MCF 10A (cell line): ENCODE measurements at regions of chr6 and their contacts with region 1.

Region 1: DNA sequence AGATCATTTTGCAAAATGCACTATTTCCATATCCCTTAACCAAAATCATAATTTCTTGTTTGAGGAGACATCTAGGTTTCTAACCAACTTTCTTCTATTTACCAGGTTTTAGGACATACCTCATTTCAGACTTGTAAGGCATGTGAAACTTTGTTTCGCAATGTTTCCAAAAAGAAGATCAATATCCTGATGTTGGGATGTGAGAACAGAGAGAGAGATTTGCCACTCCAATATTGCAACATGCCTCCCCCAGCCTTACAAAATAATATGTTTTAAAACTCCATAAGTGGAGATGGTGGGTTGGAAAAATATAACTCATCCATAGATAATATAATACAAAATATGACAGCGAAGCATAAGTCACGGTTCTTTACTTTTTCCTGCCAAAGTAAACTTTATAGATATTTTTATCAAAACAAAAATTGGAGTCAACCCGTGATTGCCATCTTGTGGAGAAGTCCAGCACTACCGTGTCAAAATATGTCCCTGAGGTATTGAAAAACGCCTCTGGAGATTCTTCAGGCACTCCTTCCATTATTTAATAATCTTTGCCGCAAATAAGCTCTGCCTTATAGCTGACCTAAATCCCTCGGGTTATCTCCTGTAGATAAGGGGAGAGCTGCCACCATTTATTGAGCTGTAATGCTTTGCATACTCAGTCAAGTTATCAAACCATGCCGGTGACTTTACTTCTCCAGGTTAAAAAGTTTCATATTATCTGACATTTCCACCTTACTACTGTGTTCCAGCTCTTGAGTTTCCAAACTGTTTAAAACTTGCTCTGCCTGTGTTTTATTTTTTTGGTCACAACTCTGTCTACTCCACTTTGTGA is 534.2 kb downstream of the HACE1 start:
- DNase-seq: peak; percentile 72
- H3K4me3 Mint-ChIP-seq: peak overlapping the region; percentile 49
- H3K27ac Mint-ChIP-seq: peak overlapping the region; percentile 77
- H3K4me1 Mint-ChIP-seq: peaks cover 33% of the 10 kb centered on the region
- H3K27me3 Mint-ChIP-seq: no peaks in the 10 kb centered on the region
- CTCF ChIP-seq: peak; percentile 53

Region 2: DNA sequence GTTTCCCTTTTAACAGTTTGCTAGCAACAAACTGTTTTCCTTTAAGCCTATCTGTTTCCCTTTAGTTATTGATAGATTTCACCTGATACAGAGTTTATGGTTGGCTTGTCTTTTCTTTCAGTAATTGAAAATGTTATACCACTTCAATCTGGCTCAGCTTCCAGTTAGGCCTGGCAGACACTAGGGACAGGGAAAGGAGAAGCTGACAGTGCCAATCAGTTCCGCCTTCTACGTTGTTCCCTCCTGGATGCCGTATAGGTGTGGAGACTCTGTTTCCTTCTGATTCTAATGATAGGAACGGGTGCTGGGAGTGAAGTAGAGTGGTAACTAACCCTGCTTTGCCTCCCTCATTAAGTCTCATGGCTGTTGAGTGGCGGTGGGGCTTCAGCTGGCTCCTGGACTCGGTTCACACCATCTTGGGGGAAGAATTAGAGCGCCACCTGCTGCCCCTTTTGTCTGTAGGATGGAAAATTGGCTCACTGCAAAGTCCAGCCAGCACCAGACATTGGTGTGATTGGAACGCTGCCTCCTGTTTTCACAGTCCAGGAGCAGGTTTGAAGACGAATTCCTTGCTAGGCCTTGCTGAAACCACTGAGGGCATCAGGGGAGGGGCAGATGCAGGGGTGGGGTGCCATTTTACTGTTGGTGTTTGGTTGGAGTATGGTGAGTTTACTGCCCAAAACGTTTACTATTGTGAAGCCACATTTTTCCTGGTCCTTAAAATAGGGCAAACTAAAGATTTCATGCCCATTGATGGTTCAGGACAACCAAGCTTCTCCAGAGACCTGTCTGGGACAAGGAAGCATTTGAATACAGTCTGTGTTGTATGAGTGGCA is 1202.6 kb before region 1 on chr6:
- CTCF ChIA-PET with region 1: no interaction called
- POLR2A ChIA-PET with region 1: no interaction called
- intact Hi-C with region 1: loop called (anchors 5 kb)
- DNase-seq: peak; percentile 76
- H3K4me3 Mint-ChIP-seq: no peak overlapping the region
- H3K27ac Mint-ChIP-seq: no peak overlapping the region
- H3K4me1 Mint-ChIP-seq: peaks cover 12% of the 10 kb centered on the region
- H3K27me3 Mint-ChIP-seq: no peaks in the 10 kb centered on the region
- CTCF ChIP-seq: peak; percentile 75

Region 3: DNA sequence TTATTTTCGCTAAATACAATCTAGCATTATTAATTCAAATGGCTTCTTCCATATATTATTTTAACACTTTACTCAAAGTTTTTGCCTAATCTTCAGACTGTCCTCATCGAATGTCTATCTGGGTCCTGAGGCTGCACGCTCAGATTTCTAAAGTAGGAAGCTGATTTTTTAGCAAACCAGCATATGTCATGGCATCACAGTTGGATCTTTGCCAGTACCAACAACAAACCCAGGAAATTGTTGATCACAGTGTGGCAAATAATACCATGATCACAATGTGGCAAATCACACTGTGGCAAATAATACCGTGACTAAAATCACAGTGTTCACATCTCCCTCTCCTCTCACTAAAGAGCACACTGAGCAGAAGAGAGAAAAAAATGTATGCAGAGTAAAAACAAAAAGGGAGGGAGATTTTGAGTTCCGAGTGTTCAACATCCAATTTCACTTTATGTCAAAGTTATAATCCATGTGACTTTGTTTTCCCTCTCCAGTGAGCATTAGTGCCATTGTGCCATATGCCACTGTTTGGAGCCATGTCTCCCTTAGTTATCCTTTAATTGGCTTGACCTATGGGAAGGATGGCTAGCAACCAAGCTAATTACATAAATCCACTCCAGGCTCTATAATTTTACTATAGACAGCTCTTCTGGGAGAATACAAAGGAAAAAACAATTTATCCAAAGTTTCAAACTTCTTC is 525.4 kb before region 1 on chr6:
- CTCF ChIA-PET with region 1: interaction called, 8 read pairs
- POLR2A ChIA-PET with region 1: no interaction called
- intact Hi-C with region 1: loop called (anchors 2 kb)
- DNase-seq: no peak
- H3K4me3 Mint-ChIP-seq: no peak overlapping the region
- H3K27ac Mint-ChIP-seq: no peak overlapping the region
- H3K4me1 Mint-ChIP-seq: no peaks in the 10 kb centered on the region
- H3K27me3 Mint-ChIP-seq: peaks cover 52% of the 10 kb centered on the region
- CTCF ChIP-seq: no peak

Region 4: DNA sequence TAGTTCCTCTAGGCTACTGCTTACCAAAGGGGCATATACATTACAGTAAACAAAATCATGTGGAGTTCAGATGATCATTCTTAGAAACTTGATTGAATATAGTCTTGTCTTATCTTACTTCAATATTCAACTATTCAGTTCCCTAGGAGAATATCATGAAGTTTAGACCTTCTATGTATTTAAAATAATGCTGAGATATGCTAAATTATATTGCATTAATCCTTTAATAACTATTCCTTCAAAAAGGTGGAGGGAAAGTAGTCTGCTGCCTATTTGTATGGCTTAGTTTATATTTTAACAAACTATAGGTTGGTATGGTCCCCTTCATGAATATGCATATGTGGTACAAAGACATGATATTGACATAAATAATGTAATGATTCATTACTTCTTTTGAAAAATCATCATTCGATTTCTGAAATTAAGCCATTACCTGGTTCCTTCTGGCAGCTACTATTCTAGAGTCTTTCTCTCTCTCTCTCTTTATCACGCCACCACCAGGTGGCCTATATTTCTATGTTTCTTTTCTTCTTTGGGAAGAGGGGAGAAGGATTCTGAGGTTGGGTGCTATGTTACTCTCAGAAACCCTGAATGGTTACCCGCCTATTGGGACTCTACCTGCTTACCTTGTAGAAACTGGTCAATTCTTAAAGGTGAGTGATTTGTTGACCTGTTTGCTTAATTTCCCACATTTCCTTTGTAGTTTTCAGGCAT is 321.6 kb before region 1 on chr6:
- CTCF ChIA-PET with region 1: interaction called, 5 read pairs
- POLR2A ChIA-PET with region 1: no interaction called
- intact Hi-C with region 1: loop called (anchors 2 kb)
- DNase-seq: peak; percentile 18
- H3K4me3 Mint-ChIP-seq: no peak overlapping the region
- H3K27ac Mint-ChIP-seq: no peak overlapping the region
- H3K4me1 Mint-ChIP-seq: no peaks in the 10 kb centered on the region
- H3K27me3 Mint-ChIP-seq: no peaks in the 10 kb centered on the region
- CTCF ChIP-seq: no peak

Region 5: DNA sequence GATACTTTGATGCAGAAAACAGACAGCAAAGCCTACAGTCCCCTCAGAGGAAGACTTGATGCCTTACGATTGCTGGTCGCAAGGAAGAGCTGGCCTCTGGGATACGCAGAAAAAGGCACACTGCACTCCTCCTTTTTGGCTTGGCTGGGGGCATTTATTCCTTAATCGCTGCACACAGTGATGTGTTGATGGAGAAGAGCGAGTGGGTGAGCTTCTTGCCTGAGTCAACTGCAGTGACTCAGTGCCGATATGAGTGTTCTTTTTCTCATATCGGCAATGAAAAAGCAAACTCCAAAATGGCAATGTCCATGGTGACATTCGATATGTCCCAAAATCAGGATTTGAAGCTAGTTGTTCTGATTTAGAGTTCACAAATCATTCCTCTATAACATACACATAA is 260.7 kb before region 1 on chr6:
- CTCF ChIA-PET with region 1: no interaction called
- POLR2A ChIA-PET with region 1: no interaction called
- intact Hi-C with region 1: no loop called
- DNase-seq: no peak
- H3K4me3 Mint-ChIP-seq: no peak overlapping the region
- H3K27ac Mint-ChIP-seq: no peak overlapping the region
- H3K4me1 Mint-ChIP-seq: peaks cover 5% of the 10 kb centered on the region
- H3K27me3 Mint-ChIP-seq: no peaks in the 10 kb centered on the region
- CTCF ChIP-seq: no peak

Region 6: GRCh38 chr6:104134876-104135275 is 190.7 kb before region 1 on chr6:
- CTCF ChIA-PET with region 1: no interaction called
- POLR2A ChIA-PET with region 1: no interaction called
- intact Hi-C with region 1: no loop called
- DNase-seq: no peak
- H3K4me3 Mint-ChIP-seq: no peak overlapping the region
- H3K27ac Mint-ChIP-seq: no peak overlapping the region
- H3K4me1 Mint-ChIP-seq: no peaks in the 10 kb centered on the region
- H3K27me3 Mint-ChIP-seq: no peaks in the 10 kb centered on the region
- CTCF ChIP-seq: no peak

Region 7: DNA sequence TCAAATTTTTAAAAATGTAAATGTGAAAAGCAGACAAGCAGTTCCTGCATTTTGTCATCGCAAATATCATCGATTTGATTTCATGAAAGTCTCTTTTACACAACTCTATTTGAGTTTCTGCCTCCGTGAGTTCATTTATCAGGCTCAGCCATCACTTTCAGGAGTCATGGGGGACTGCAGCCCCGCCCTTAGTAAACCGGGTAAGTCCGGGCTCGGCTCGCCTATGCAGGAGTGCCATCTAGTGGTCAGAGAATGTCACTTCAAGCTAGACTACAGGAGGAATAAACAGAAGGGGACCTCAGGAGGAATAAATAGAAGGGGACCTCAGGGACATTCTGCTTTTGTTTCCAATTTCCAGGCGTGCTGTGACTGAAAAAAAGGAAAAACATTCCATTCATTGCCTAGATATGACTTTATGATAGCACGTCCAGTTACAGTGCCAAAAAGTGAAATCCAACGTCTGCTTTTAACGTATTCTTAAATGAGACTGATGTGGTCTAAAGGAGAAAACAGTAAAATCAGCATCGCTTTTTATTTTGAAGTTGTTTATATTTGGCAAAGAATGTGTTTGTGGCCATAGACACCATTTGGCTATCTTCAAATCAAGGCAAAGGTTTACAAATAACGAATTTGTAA is 200.2 kb after region 1 on chr6:
- CTCF ChIA-PET with region 1: interaction called, 10 read pairs
- POLR2A ChIA-PET with region 1: no interaction called
- intact Hi-C with region 1: loop called (anchors 2 kb)
- DNase-seq: peak; percentile 86
- H3K4me3 Mint-ChIP-seq: peak overlapping the region; percentile 65
- H3K27ac Mint-ChIP-seq: peak overlapping the region; percentile 65
- H3K4me1 Mint-ChIP-seq: peaks cover 15% of the 10 kb centered on the region
- H3K27me3 Mint-ChIP-seq: no peaks in the 10 kb centered on the region
- CTCF ChIP-seq: peak; percentile 93